Activated CD4-positive, alpha-beta T cell treated with anti-CD3 and anti-CD28 coated beads, Interleukin-2, amount 10 ng/mL, durations not matched to agents 24 days and 14 days (primary cell): ENCODE measurements at regions of chr9 and their contacts with region 1.

Region 1: GRCh38 chr9:69121828-69122548 is 52.1 kb upstream of the TJP2 start:
- DNase-seq: peak; percentile 85
- H3K4me3 Mint-ChIP-seq: peak overlapping the region; percentile 86
- H3K27ac Mint-ChIP-seq: peak overlapping the region; percentile 25
- H3K4me1 Mint-ChIP-seq: peaks cover 8% of the 10 kb centered on the region
- H3K27me3 Mint-ChIP-seq: peaks cover 13% of the 10 kb centered on the region

Region 2: GRCh38 chr9:69174616-69175463 is 52.9 kb after region 1 on chr9:
- intact Hi-C with region 1: loop called (anchors 5 kb)
- DNase-seq: peak; percentile 80
- H3K4me3 Mint-ChIP-seq: peak overlapping the region; percentile 84
- H3K27ac Mint-ChIP-seq: peak overlapping the region; percentile 78
- H3K4me1 Mint-ChIP-seq: peaks cover 61% of the 10 kb centered on the region
- H3K27me3 Mint-ChIP-seq: peaks cover 24% of the 10 kb centered on the region